ENCODE measurements at regions of chr19 and their contacts with region 1.

Region 1: GRCh38 chr19:10502524-10503001 is 593 bp downstream of the KEAP1 start:
- DNase-seq: peak; percentile 74 to 93 (median 87)
- ATAC-seq: peak; percentile 90
- H3K4me3 ChIP-seq: peak overlapping the region; percentile 83 to 96
- H3K4me3 Mint-ChIP-seq: peak overlapping the region; percentile 83
- H3K27ac ChIP-seq: peak overlapping the region; percentile 73 to 75
- H3K27ac Mint-ChIP-seq: peak overlapping the region; percentile 71
- H3K4me1 ChIP-seq: peaks cover 11% of the 10 kb centered on the region
- H3K4me1 Mint-ChIP-seq: peaks cover 31% of the 10 kb centered on the region
- H3K27me3 ChIP-seq: no peaks in the 10 kb centered on the region
- H3K27me3 Mint-ChIP-seq: no peaks in the 10 kb centered on the region
- CTCF ChIP-seq: no peak

Region 2: GRCh38 chr19:10416380-10417257 is 85.9 kb before region 1 on chr19:
- CTCF ChIA-PET with region 1: no interaction called
- POLR2A ChIA-PET with region 1: no interaction called
- intact Hi-C with region 1: loop called in 1 of 2 experiments (anchors 5 kb)
- DNase-seq: peak; percentile 76 to 100 (median 98)
- ATAC-seq: peak; percentile 63
- H3K4me3 ChIP-seq: peak overlapping the region; percentile 57 to 63
- H3K4me3 Mint-ChIP-seq: peak overlapping the region; percentile 71
- H3K27ac ChIP-seq: peak overlapping the region; percentile 55 to 88
- H3K27ac Mint-ChIP-seq: peak overlapping the region; percentile 91
- H3K4me1 ChIP-seq: peaks cover 65% of the 10 kb centered on the region
- H3K4me1 Mint-ChIP-seq: peaks cover 54% of the 10 kb centered on the region
- H3K27me3 ChIP-seq: peaks cover 33 to 40% of the 10 kb centered on the region in 2 experiments
- H3K27me3 Mint-ChIP-seq: peaks cover 30% of the 10 kb centered on the region
- CTCF ChIP-seq: peak; percentile 100

Region 3: DNA sequence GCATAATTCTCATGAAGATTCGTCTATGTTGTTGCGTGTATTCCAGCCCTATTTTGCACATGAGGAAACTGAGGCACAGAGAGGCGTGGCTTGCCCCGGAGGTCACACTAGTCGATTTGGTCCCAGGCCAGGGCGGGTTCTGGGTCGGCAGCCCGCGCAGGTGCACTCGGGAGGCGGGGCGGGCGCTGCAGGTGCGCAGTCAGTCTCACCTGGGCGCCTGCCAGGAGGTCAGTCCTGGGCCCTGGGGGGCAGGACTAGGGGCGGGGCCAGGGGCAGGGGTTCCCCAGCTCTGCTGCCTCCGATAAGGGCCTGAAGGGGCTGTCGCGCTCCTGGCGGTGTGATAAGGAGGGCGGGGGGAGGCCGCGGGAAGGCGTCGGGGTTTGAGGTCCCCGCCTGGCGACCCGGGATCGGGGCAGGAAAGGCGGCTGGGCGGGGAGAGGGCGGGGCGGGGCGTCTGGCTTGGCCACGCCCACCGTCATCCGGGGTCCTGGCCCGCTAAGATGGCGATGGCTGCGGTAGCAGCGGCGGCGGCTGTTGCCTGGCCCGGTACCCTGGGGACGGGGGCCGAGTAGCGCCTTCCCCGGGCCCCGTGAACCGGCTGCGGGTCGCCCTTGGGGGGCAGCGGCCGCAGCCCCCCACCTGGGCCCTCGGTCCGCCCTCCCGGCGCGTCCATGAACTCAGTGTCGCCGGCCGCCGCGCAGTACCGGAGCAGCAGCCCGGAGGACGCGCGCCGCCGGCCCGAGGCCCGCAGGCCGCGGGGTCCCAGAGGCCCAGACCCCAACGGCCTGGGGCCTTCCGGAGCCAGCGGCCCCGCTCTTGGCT is 41.1 kb after region 1 on chr19 and contains the start of gene ATG4D:
- CTCF ChIA-PET with region 1: no interaction called
- POLR2A ChIA-PET with region 1: no interaction called
- intact Hi-C with region 1: loop called (anchors 2 to 5 kb)
- DNase-seq: peak; percentile 66 to 91 (median 84)
- ATAC-seq: peak; percentile 86
- H3K4me3 ChIP-seq: peak within 1 kb of the TSS; percentile 82 to 90
- H3K4me3 Mint-ChIP-seq: peak within 1 kb of the TSS; percentile 88
- H3K27ac ChIP-seq: peak within 1 kb of the TSS; percentile 63 to 66
- H3K27ac Mint-ChIP-seq: peak within 1 kb of the TSS; percentile 91
- H3K4me1 ChIP-seq: peaks cover 17% of the 10 kb centered on the region
- H3K4me1 Mint-ChIP-seq: peaks cover 19% of the 10 kb centered on the region
- H3K27me3 ChIP-seq: no peaks in the 10 kb centered on the region
- H3K27me3 Mint-ChIP-seq: peaks cover 7% of the 10 kb centered on the region
- CTCF ChIP-seq: no peak
- total RNA-seq, gene ATG4D: 82.0 to 91.1 TPM

Region 4: GRCh38 chr19:10574462-10574861 is 71.9 kb after region 1 on chr19:
- CTCF ChIA-PET with region 1: interaction called, 16 read pairs
- POLR2A ChIA-PET with region 1: no interaction called
- intact Hi-C with region 1: loop called (anchors 1 to 2 kb)
- DNase-seq: no peak
- ATAC-seq: no peak
- H3K4me3 ChIP-seq: no peak overlapping the region
- H3K4me3 Mint-ChIP-seq: no peak overlapping the region
- H3K27ac ChIP-seq: no peak overlapping the region
- H3K27ac Mint-ChIP-seq: no peak overlapping the region
- H3K4me1 ChIP-seq: peaks cover 9% of the 10 kb centered on the region
- H3K4me1 Mint-ChIP-seq: peaks cover 8% of the 10 kb centered on the region
- H3K27me3 ChIP-seq: no peaks in the 10 kb centered on the region
- H3K27me3 Mint-ChIP-seq: no peaks in the 10 kb centered on the region
- CTCF ChIP-seq: no peak

Region 5: DNA sequence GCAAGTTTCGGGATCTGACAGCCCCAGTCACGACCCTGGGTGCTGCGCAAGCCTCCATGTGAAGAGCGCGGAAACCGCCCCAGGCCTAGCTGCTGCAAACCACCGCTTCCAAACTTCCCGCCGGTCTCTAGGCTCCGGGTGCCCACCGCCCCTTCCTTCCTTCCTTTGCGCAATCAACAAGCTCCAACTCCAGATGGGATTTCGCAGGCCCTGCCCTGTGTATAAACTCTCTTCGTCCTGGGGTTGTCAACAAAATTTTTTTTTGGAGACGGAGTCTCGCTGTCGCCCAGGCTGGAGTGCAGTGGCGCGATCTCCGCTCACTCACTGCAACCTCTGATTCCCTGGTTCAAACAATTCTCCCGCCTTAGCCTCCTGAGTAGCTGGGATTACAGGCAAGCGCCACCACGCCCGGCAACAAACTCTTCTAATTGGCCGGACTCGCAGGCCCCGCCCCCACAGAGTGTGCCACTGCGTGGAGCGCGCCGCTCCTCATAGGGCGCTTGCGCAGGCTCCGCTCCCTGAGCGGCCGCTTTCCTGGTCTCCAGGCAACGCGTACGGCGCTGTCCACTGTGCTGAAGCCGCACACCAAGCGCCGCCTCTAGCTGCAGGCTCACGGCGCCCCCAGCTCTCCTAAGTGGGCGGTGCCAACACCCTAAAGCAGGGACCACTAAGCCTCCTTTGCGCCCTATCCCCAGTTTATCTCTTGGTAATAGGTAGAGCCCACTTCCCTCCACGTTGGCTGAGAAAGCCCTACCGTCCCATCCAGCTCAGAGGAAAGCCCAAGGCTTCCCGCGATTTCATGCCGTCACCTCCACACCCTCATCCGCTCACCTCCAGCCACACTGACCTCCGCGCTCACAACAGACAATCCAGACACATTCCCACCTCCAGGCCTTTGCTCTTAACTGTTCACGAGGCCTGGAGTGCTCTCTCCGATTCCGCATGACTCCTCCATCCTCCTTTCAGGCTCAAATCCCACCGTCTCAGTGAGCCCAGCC is 193.1 kb after region 1 on chr19:
- CTCF ChIA-PET with region 1: interaction called, 3 read pairs
- POLR2A ChIA-PET with region 1: no interaction called
- intact Hi-C with region 1: loop called in 1 of 2 experiments (anchors 2 kb)
- DNase-seq: peak; percentile 77 to 94 (median 87)
- ATAC-seq: peak; percentile 97
- H3K4me3 ChIP-seq: peak overlapping the region; percentile 33 to 58
- H3K4me3 Mint-ChIP-seq: peak overlapping the region; percentile 78
- H3K27ac ChIP-seq: no peak overlapping the region
- H3K27ac Mint-ChIP-seq: no peak overlapping the region
- H3K4me1 ChIP-seq: peaks cover 12% of the 10 kb centered on the region
- H3K4me1 Mint-ChIP-seq: peaks cover 17% of the 10 kb centered on the region
- H3K27me3 ChIP-seq: peaks cover 0 to 2% of the 10 kb centered on the region in 2 experiments
- H3K27me3 Mint-ChIP-seq: peaks cover 5% of the 10 kb centered on the region
- CTCF ChIP-seq: no peak